Adrenal gland (tissue), 19 donors: ENCODE measurements at regions of chr20 and their contacts with region 1.

Region 1: DNA sequence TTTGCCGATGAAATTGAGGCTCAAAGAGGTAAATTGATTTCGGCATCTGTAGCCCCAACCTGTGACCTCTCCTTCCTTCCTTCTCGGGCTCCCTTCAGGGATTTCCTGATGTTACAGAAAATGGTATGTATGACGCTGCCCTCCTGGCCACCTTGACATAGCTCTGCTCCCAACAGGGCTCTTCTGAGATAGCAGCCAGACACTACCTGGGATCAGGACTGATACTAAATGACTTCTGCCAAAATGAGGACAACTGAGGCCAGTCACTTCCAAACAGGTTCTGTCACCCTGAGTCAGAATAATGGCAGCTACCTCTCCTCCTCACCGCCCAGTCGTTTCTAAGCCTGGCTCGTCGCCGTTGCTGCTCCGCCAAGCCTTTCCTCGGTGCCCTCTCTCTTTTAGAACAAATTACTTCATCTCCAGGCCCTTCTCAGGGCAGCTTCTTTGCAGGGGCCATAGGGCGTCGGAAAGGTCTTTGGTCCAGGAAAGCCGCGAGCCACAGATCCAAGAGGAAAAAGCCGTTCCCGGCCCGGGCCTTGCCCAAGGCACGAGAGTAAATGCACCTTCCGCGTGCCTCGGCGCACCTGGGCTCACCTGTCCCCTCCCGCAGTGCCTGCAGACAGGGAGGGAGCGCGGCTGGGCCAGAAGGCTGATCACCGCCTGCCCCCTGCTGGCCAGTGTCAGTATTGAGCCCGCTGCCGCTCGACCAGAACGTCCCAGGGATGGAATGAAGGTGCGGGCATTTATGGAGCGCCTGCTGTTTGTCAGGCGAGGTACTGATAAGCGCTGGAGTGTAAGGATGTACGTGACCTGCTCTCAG is 904 bp upstream of the LPIN3 start:
- DNase-seq: peak; percentile 67 to 91 (median 79)
- H3K4me3 ChIP-seq: peak overlapping the region in 2 of 4 donors; percentile 1 to 56
- H3K27ac ChIP-seq: peak overlapping the region in 4 of 5 donors; percentile 33 to 81 (median 62)
- H3K4me1 ChIP-seq: peaks cover 8 to 18% of the 10 kb centered on the region in 2 donors
- H3K27me3 ChIP-seq: no peaks in the 10 kb centered on the region
- CTCF ChIP-seq: peak; percentile 98 to 100 (median 99)
- POLR2A ChIP-seq: no peak

Region 2: GRCh38 chr20:40962730-40963504 is 376.8 kb before region 1 on chr20:
- intact Hi-C with region 1: loop called in 1 of 2 experiments (anchors 10 kb)
- DNase-seq: peak; percentile 69 to 87 (median 72)
- H3K4me3 ChIP-seq: no peak overlapping the region
- H3K27ac ChIP-seq: no peak overlapping the region
- H3K4me1 ChIP-seq: peaks cover 0 to 3% of the 10 kb centered on the region in 2 donors
- H3K27me3 ChIP-seq: no peaks in the 10 kb centered on the region
- CTCF ChIP-seq: peak; percentile 84 to 98 (median 88)
- POLR2A ChIP-seq: no peak

Region 3: DNA sequence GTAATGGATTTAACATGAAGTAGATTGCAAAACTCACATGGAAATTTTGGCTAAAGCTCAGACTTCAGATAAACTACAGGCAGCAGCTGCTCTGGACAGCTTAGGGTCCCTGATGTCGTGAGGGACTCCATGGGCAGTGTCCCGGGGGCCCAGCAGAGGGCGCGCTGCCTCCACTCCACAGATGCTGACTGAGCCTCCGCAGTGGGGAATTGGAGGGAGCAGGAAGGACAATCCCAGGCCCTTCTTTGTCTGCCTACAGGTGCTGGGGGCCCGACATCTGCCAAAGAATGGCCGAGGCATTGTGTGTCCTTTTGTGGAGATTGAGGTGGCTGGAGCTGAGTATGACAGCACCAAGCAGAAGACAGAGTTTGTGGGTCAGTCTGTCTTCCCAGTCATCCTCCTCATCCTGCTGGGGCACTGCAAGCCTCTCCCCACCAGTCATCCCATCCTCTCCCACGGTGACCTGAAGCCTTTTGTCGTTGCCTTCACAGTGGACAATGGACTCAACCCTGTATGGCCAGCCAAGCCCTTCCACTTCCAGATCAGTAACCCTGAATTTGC is 166.5 kb before region 1 on chr20:
- intact Hi-C with region 1: loop called (anchors 2 to 5 kb)
- DNase-seq: peak; percentile 84 to 95 (median 87)
- H3K4me3 ChIP-seq: no peak overlapping the region
- H3K27ac ChIP-seq: peak overlapping the region in 3 of 5 donors; percentile 50 to 89 (median 81)
- H3K4me1 ChIP-seq: peaks cover 14 to 25% of the 10 kb centered on the region in 2 donors
- H3K27me3 ChIP-seq: no peaks in the 10 kb centered on the region
- CTCF ChIP-seq: peak; percentile 93 to 99 (median 98)
- POLR2A ChIP-seq: no peak

Region 4: DNA sequence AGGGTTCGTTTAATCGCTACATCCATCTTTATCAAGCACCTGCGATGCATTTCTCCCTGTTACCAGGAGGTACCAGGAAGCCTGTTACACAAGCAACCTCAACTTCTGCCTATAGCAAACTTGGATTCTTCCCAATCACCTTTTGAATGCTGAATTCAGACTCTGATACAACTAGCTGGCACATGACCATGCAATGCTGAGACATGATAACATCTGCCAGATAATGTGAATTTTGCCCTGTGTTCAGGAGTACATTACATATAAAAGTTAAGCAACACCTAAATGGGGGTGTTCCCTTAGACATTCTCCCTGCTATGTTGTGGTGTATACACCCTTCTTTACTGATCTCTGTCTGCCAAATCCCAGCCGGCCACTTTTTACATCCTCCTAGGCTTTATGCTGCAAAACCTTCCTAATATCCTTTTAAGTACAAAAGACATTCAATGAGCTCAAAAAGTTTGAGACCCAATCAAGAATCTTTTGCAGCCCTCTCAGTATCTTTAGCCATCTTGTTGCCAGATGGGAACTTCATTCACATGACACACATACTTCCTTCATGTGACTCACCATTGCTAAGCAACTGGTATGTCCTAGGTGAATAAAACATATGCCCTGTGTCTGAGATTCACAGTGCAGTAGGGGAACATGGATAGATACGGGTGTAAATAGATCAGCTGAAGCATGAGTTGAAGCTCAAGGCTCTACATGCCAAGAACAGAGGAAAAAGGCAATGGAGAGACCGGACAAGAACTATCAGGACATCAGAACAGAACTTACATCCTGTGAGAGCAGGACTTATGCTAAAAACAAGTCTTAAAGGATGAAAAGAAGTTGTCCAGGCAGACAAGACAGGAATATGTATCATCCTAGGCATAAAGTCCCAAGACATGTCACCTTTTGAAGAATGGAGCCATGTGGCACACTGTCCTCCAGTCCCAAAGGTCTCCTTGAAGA is 106.5 kb before region 1 on chr20:
- intact Hi-C with region 1: loop called in 1 of 2 experiments (anchors 5 kb)
- DNase-seq: no peak
- H3K4me3 ChIP-seq: no peak overlapping the region
- H3K27ac ChIP-seq: peak overlapping the region; percentile 38 to 71 (median 52)
- H3K4me1 ChIP-seq: peaks cover 28 to 33% of the 10 kb centered on the region in 2 donors
- H3K27me3 ChIP-seq: no peaks in the 10 kb centered on the region
- CTCF ChIP-seq: no peak
- POLR2A ChIP-seq: no peak

Region 5: GRCh38 chr20:41249406-41250281 is 90.1 kb before region 1 on chr20:
- intact Hi-C with region 1: loop called in 1 of 2 experiments (anchors 10 kb)
- DNase-seq: peak; percentile 78 to 95 (median 89)
- H3K4me3 ChIP-seq: no peak overlapping the region
- H3K27ac ChIP-seq: peak overlapping the region; percentile 55 to 89 (median 79)
- H3K4me1 ChIP-seq: peaks cover 42 to 69% of the 10 kb centered on the region in 2 donors
- H3K27me3 ChIP-seq: no peaks in the 10 kb centered on the region
- CTCF ChIP-seq: peak in 4 of 6 experiments; percentile 7 to 43 (median 11)
- POLR2A ChIP-seq: peak in 1 of 2 donors; percentile 30

Region 6: GRCh38 chr20:41411391-41411847 is 71.7 kb after region 1 on chr20:
- intact Hi-C with region 1: loop called (anchors 5 to 10 kb)
- DNase-seq: no peak
- H3K4me3 ChIP-seq: no peak overlapping the region
- H3K27ac ChIP-seq: peak overlapping the region in 3 of 5 donors; percentile 27 to 57 (median 43)
- H3K4me1 ChIP-seq: peaks cover 0 to 15% of the 10 kb centered on the region in 2 donors
- H3K27me3 ChIP-seq: no peaks in the 10 kb centered on the region
- CTCF ChIP-seq: peak; percentile 23 to 57 (median 44)
- POLR2A ChIP-seq: no peak